GM12878 (cell line): ENCODE measurements at regions of chr13 and their contacts with region 1.

Region 1: GRCh38 chr13:87274209-87274819 is 396.9 kb upstream of the SLITRK5 start:
- DNase-seq: no peak
- ATAC-seq: peak; percentile 88
- H3K4me3 ChIP-seq: no peak overlapping the region
- H3K27ac ChIP-seq: no peak overlapping the region
- H3K4me1 ChIP-seq: no peaks in the 10 kb centered on the region
- H3K27me3 ChIP-seq: no peaks in the 10 kb centered on the region
- CTCF ChIP-seq: peak; percentile 42 to 61 (median 59); a peak in 5 of 6 replicates
- EP300 ChIP-seq: no peak
- POLR2A ChIP-seq: no peak
- RAD21 ChIP-seq: peak; percentile 64

Region 2: GRCh38 chr13:86567119-86567518 is 707.2 kb before region 1 on chr13:
- CTCF ChIA-PET with region 1: interaction called, 3 read pairs
- POLR2A ChIA-PET with region 1: no interaction called
- RAD21 ChIA-PET with region 1: interaction called, 3 read pairs
- SMC1A ChIA-PET with region 1: interaction called, 4 read pairs
- in situ Hi-C with region 1: no loop called
- intact Hi-C with region 1: loop called (anchors 2 kb)
- DNase-seq: no peak
- ATAC-seq: peak; percentile 81
- H3K4me3 ChIP-seq: no peak overlapping the region
- H3K27ac ChIP-seq: no peak overlapping the region
- H3K4me1 ChIP-seq: no peaks in the 10 kb centered on the region
- H3K27me3 ChIP-seq: no peaks in the 10 kb centered on the region
- CTCF ChIP-seq: peak; percentile 13 to 42 (median 29); a peak in 3 of 6 replicates
- EP300 ChIP-seq: no peak
- POLR2A ChIP-seq: no peak
- RAD21 ChIP-seq: 0 out of 2 replicates have a peak, but pooled peaks have one; percentile 17

Region 3: DNA sequence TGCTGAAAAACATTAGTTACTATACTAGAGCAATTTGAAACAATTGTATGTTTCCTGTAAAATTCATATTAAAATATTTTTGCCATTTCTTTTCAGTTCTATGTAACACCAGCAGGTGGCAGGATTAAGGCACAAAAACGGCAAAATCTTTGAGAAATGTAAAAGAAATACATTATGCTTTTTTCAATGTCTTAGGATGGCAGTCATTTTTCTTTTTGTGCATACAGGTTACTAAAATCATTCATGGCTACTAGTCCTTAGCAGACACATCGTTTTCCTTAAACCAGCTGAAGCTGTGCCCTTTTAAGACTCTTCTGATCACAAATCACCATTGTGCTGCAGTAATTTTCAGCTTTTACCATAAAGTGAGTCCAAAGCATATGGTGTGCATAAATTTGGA is 403.9 kb before region 1 on chr13:
- CTCF ChIA-PET with region 1: interaction called, 71 read pairs
- POLR2A ChIA-PET with region 1: no interaction called
- RAD21 ChIA-PET with region 1: interaction called, 23 read pairs
- SMC1A ChIA-PET with region 1: interaction called, 42 read pairs
- in situ Hi-C with region 1: no loop called
- intact Hi-C with region 1: loop called (anchors 1 kb)
- DNase-seq: no peak
- ATAC-seq: no peak
- H3K4me3 ChIP-seq: no peak overlapping the region
- H3K27ac ChIP-seq: no peak overlapping the region
- H3K4me1 ChIP-seq: no peaks in the 10 kb centered on the region
- H3K27me3 ChIP-seq: no peaks in the 10 kb centered on the region
- CTCF ChIP-seq: peak; percentile 35 to 50 (median 37); a peak in 5 of 6 replicates
- EP300 ChIP-seq: no peak
- POLR2A ChIP-seq: no peak
- RAD21 ChIP-seq: peak; percentile 57

Region 4: GRCh38 chr13:87084192-87084591 is 190.1 kb before region 1 on chr13:
- CTCF ChIA-PET with region 1: no interaction called
- POLR2A ChIA-PET with region 1: no interaction called
- RAD21 ChIA-PET with region 1: no interaction called
- SMC1A ChIA-PET with region 1: no interaction called
- in situ Hi-C with region 1: no loop called
- intact Hi-C with region 1: no loop called
- DNase-seq: no peak
- ATAC-seq: no peak
- H3K4me3 ChIP-seq: no peak overlapping the region
- H3K27ac ChIP-seq: no peak overlapping the region
- H3K4me1 ChIP-seq: no peaks in the 10 kb centered on the region
- H3K27me3 ChIP-seq: no peaks in the 10 kb centered on the region
- CTCF ChIP-seq: no peak
- EP300 ChIP-seq: no peak
- POLR2A ChIP-seq: no peak
- RAD21 ChIP-seq: no peak

Region 5: DNA sequence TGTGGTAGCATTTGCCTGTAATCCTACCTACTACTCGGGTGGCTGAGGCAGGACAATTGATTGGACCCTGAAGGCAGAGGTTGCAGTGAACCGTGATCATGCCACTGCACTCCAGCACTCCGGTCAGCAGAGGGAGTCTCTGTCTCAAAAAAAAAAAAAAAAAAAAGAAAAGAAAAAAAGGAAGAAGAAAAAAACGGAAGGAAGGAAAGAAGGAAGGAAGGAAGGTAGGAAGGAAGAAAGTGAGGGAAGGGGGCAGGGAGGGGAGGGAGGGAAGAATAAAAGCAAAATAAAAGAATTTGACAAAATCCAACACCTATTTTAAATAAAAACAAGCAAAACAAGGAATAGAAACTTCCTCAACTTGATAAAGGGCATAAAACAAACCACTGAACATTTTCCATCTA is 14.8 kb before region 1 on chr13:
- CTCF ChIA-PET with region 1: interaction called, 15 read pairs
- POLR2A ChIA-PET with region 1: no interaction called
- RAD21 ChIA-PET with region 1: interaction called, 3 read pairs
- SMC1A ChIA-PET with region 1: interaction called, 5 read pairs
- in situ Hi-C with region 1: no loop called
- intact Hi-C with region 1: no loop called
- DNase-seq: no peak
- ATAC-seq: peak; percentile 61
- H3K4me3 ChIP-seq: no peak overlapping the region
- H3K27ac ChIP-seq: no peak overlapping the region
- H3K4me1 ChIP-seq: no peaks in the 10 kb centered on the region
- H3K27me3 ChIP-seq: no peaks in the 10 kb centered on the region
- CTCF ChIP-seq: peak in 1 of 3 experiments; percentile 38; a peak in 2 of 6 replicates
- EP300 ChIP-seq: no peak
- POLR2A ChIP-seq: no peak
- RAD21 ChIP-seq: no peak

Region 6: DNA sequence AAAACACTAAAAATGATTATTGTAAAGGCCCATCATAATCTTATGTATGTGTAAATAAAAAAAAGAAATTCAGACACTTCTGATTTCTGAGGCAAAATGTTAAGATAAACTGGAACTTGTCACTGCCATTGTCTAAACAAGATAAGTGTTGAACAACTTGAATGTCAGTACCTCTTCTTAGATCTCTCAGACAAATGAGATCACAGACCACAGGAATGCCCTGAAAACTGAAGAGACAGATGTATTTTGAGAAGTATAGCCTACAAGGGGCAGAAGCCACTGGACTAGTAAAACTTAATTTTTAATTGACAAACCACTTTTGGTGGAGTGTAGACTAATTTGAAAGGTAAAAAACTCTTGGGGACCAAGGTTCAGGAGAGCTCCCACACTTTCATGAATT is 21.3 kb after region 1 on chr13:
- CTCF ChIA-PET with region 1: interaction called, 14 read pairs
- POLR2A ChIA-PET with region 1: no interaction called
- RAD21 ChIA-PET with region 1: no interaction called
- SMC1A ChIA-PET with region 1: interaction called, 5 read pairs
- in situ Hi-C with region 1: no loop called
- intact Hi-C with region 1: no loop called
- DNase-seq: no peak
- ATAC-seq: no peak
- H3K4me3 ChIP-seq: no peak overlapping the region
- H3K27ac ChIP-seq: no peak overlapping the region
- H3K4me1 ChIP-seq: no peaks in the 10 kb centered on the region
- H3K27me3 ChIP-seq: no peaks in the 10 kb centered on the region
- CTCF ChIP-seq: no peak
- EP300 ChIP-seq: no peak
- POLR2A ChIP-seq: no peak
- RAD21 ChIP-seq: no peak

Region 7: DNA sequence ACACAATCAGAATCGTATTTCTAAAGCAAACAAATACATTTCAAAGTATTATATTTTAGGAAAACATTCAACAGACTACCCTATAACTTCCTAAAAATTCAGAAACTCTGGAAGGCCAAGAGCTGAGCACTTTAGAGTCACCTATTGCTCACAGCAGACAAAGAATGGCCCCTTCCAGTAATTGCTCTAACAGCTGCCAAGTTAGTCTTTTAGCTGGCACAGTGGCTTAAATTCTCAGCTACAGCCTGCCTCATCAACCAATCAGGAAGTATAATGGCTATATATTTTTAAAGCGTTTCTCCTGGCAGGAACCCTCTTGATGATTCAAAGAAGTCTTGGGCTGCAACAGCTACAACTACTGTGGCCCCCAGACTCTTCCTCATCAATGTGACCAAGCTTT is 382.0 kb after region 1 on chr13:
- CTCF ChIA-PET with region 1: no interaction called
- POLR2A ChIA-PET with region 1: no interaction called
- RAD21 ChIA-PET with region 1: no interaction called
- SMC1A ChIA-PET with region 1: no interaction called
- in situ Hi-C with region 1: no loop called
- intact Hi-C with region 1: no loop called
- DNase-seq: no peak
- ATAC-seq: no peak
- H3K4me3 ChIP-seq: no peak overlapping the region
- H3K27ac ChIP-seq: no peak overlapping the region
- H3K4me1 ChIP-seq: no peaks in the 10 kb centered on the region
- H3K27me3 ChIP-seq: no peaks in the 10 kb centered on the region
- CTCF ChIP-seq: no peak
- EP300 ChIP-seq: no peak
- POLR2A ChIP-seq: no peak
- RAD21 ChIP-seq: no peak